GM12878 (cell line): ENCODE measurements at regions of chr3 and their contacts with region 1.

Region 1: DNA sequence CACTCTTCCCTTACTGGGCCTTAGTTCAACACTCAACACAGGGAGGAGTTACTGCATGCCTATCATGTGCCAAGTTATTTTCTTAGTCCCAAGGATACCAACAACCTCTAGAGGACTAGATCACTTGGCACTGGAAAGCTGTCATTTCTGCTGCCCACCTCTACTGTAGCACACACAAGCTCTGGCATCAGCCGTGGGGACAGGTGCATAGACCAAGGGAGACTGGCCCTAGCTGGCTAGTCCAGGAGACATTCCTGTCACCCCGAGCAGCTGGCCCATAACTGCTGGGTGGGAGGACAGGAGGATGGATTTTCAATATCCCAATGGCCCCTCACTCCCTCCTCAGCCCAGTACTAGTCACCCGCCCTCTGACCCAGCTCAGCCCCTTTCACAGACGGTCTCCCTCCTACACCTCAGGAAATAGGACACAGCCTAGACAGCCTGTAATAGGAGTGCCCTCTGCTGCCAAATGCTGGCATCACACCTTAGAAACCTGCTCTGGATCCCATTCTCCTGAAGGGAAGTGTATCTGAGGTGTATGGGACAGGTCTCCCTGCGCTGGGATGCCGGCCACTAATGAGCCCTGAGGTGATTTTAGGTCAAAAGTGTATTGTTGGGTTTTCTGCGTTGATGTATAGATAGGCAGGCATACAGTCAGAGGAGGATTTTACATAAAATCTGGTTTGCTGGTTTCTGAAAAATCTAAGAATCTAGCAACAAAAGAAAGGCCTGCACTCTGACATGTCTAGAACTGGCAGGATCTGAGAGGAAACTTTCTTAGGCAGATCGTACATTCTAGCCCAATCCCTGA is 3.4 kb upstream of the DZIP1L start:
- DNase-seq: peak; percentile 25
- ATAC-seq: peak; percentile 87
- H3K4me3 ChIP-seq: no peak overlapping the region
- H3K27ac ChIP-seq: no peak overlapping the region
- H3K4me1 ChIP-seq: no peaks in the 10 kb centered on the region
- H3K27me3 ChIP-seq: peaks cover 2 to 8% of the 10 kb centered on the region in 2 experiments; a peak in 3 of 4 replicates
- CTCF ChIP-seq: peak; percentile 86 to 92 (median 86)
- EP300 ChIP-seq: no peak
- POLR2A ChIP-seq: no peak
- RAD21 ChIP-seq: peak; percentile 88

Region 2: GRCh38 chr3:138068579-138069174 is 50.1 kb before region 1 on chr3:
- CTCF ChIA-PET with region 1: interaction called, 31 read pairs
- POLR2A ChIA-PET with region 1: no interaction called
- RAD21 ChIA-PET with region 1: interaction called, 11 read pairs
- SMC1A ChIA-PET with region 1: interaction called, 45 read pairs
- in situ Hi-C with region 1: loop called (anchors 5 kb)
- intact Hi-C with region 1: loop called (anchors 1 kb)
- DNase-seq: no peak
- ATAC-seq: peak; percentile 91
- H3K4me3 ChIP-seq: no peak overlapping the region
- H3K27ac ChIP-seq: no peak overlapping the region
- H3K4me1 ChIP-seq: peaks cover 13% of the 10 kb centered on the region
- H3K27me3 ChIP-seq: peaks cover 0 to 2% of the 10 kb centered on the region in 2 experiments; a peak in 3 of 4 replicates
- CTCF ChIP-seq: peak; percentile 94 to 99 (median 98)
- EP300 ChIP-seq: no peak
- POLR2A ChIP-seq: no peak
- RAD21 ChIP-seq: peak; percentile 100

Region 3: GRCh38 chr3:139173372-139174108 is 1054.7 kb after region 1 on chr3:
- CTCF ChIA-PET with region 1: no interaction called
- POLR2A ChIA-PET with region 1: no interaction called
- RAD21 ChIA-PET with region 1: no interaction called
- SMC1A ChIA-PET with region 1: no interaction called
- in situ Hi-C with region 1: no loop called
- intact Hi-C with region 1: no loop called
- DNase-seq: peak; percentile 23
- ATAC-seq: peak; percentile 48
- H3K4me3 ChIP-seq: peak overlapping the region; percentile 15; the same call in 1 of the 2 replicates
- H3K27ac ChIP-seq: no peak overlapping the region
- H3K4me1 ChIP-seq: no peaks in the 10 kb centered on the region
- H3K27me3 ChIP-seq: no peaks in the 10 kb centered on the region
- CTCF ChIP-seq: no peak
- EP300 ChIP-seq: no peak
- POLR2A ChIP-seq: no peak
- RAD21 ChIP-seq: no peak